Left lung (tissue), 14 donors: ENCODE measurements at regions of chr5 and their contacts with region 1.

Region 1: GRCh38 chr5:159106569-159107282 is 7.0 kb upstream of the EBF1 start:
- DNase-seq: peak; percentile 68 to 89 (median 80)
- ATAC-seq: peak; percentile 93
- H3K4me3 ChIP-seq: peak overlapping the region in 1 of 2 donors; percentile 20
- H3K27ac ChIP-seq: no peak overlapping the region
- H3K4me1 ChIP-seq: peaks cover 9 to 13% of the 10 kb centered on the region in 2 donors
- H3K27me3 ChIP-seq: peaks cover 52 to 93% of the 10 kb centered on the region in 2 donors
- CTCF ChIP-seq: peak; percentile 85 to 89

Region 2: GRCh38 chr5:158174918-158175851 is 931.5 kb before region 1 on chr5:
- intact Hi-C with region 1: loop called in 1 of 2 experiments (anchors 10 kb)
- DNase-seq: peak in 3 of 4 donors; percentile 62 to 80 (median 67)
- ATAC-seq: peak; percentile 92
- H3K4me3 ChIP-seq: no peak overlapping the region
- H3K27ac ChIP-seq: no peak overlapping the region
- H3K4me1 ChIP-seq: no peaks in the 10 kb centered on the region
- H3K27me3 ChIP-seq: no peaks in the 10 kb centered on the region
- CTCF ChIP-seq: peak; percentile 52 to 59

Region 3: DNA sequence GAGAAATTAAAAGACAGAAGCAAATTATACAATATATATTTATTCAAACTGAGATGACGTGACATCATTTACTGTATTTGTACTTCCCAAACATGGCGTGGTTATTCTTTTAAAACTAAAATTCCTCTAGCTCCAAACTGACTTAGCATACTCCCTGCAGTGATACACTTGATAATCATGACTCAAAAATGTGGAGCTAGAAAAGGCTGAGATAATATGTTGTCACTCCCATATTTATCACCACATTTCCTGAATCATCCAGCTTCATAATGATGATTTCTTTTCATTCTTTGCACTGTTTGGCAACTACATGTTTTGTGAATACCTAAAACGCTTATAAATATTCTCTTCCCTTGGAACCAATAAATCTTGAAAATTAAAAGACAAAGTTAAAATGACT is 348.1 kb before region 1 on chr5:
- intact Hi-C with region 1: no loop called
- DNase-seq: no peak
- ATAC-seq: no peak
- H3K4me3 ChIP-seq: no peak overlapping the region
- H3K27ac ChIP-seq: no peak overlapping the region
- H3K4me1 ChIP-seq: no peaks in the 10 kb centered on the region
- H3K27me3 ChIP-seq: no peaks in the 10 kb centered on the region
- CTCF ChIP-seq: no peak

Region 4: DNA sequence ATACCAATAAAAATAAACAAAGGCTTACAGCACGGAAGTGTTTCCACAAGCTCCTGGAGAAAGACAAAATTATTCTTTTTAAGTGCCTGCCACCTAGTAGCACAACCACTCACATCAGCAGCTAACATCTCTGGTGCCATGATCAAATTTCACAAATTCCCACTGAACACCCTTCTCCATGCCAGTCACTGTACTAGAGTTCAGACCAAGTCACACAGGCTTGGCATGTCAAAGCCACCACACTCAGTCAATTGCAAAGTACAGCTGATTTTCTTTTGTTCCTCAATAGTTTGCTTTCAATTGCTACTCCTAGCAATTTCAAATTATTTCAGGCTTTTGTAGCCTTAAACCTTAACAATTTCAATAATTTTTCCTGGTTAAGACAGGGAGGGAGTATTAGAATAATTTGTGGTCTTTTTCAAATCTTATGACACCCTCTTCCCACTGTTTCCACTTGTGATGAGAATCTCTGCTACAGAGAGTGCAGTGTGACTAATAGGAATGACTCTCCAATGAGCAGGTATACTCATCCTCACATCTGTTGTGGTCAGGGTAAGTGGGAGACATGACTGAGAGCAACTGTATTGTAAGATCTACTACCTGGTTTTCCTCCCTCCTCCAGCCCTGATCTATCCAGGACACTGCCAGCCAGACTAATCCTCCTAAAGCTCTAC is 56.4 kb after region 1 on chr5:
- intact Hi-C with region 1: no loop called
- DNase-seq: no peak
- ATAC-seq: peak; percentile 81
- H3K4me3 ChIP-seq: no peak overlapping the region
- H3K27ac ChIP-seq: peak overlapping the region; percentile 31 to 72
- H3K4me1 ChIP-seq: peaks cover 0 to 17% of the 10 kb centered on the region in 2 donors
- H3K27me3 ChIP-seq: no peaks in the 10 kb centered on the region
- CTCF ChIP-seq: no peak